Activated CD8-positive, alpha-beta T cell treated with anti-CD3 and anti-CD28 coated beads, Interleukin-2, amount 10 ng/mL, durations not matched to agents 7 days and 5 days (primary cell): ENCODE measurements at regions of chr7 and their contacts with region 1.

Region 1: GRCh38 chr7:76314042-76314721 is 11.7 kb downstream of the HSPB1 start:
- DNase-seq: peak; percentile 98
- ATAC-seq: peak; percentile 57
- H3K4me3 Mint-ChIP-seq: peak overlapping the region; percentile 49
- H3K27ac Mint-ChIP-seq: peak overlapping the region; percentile 83
- H3K4me1 Mint-ChIP-seq: peaks cover 31% of the 10 kb centered on the region
- H3K27me3 Mint-ChIP-seq: no peaks in the 10 kb centered on the region

Region 2: DNA sequence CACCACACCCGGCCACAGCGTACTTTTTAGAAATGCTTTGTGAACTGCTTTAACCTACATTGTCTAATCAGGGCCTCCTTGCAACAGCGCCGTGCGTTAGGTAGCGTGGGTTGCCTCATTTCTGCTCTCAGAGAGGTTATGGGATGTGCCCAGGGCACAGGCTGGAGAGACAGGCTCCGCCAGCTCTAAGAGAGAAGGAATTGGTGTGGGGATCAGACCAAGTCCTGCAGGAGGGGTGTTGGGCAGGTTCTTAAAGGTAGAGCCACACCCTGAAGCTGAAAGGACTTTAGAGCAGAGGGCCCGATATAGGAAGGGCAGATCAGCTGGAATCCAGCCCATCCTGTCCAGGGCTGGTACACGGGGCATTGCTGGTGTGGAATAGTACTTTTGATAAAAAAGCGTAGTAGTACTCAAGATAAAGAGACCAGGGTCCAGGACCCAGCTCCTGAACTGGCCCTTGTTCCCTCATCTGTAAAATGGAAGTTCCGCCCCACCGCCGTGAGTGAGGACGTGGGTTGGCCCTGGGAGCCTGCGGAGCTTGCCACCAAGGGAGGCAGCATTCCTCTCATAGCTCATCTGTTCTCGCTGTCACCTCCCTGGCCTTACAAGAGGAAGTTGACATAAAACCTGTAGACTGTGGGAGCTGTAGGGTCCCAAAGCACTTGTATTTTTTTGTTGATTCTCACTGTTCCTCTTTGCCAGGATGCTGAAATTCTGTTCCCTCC is 357.0 kb before region 1 on chr7:
- CTCF ChIA-PET with region 1: no interaction called
- POLR2A ChIA-PET with region 1: no interaction called
- DNase-seq: no peak
- ATAC-seq: no peak
- H3K4me3 Mint-ChIP-seq: no peak overlapping the region
- H3K27ac Mint-ChIP-seq: no peak overlapping the region
- H3K4me1 Mint-ChIP-seq: no peaks in the 10 kb centered on the region
- H3K27me3 Mint-ChIP-seq: no peaks in the 10 kb centered on the region

Region 3: DNA sequence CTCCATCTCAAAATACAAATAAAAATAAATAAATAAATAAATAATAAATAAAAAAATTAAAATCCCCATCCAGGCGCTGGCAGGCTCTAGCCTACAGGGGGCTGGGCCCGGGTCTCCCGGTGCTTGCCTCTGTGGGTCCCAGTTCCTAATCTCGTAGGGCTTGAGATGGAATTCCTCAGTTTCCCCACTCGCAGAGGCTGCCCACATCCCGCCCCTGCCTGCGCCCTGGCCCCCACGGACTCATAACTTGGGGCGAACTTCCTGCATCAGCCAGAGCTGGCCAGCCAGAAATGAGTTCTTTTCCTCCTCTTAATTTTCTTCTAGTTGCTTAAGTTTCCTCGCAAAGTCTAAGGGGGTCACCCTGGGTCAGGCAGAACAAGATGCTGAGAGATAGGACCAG is 134.5 kb before region 1 on chr7:
- CTCF ChIA-PET with region 1: interaction called, 107 read pairs
- POLR2A ChIA-PET with region 1: interaction called, 9 read pairs
- DNase-seq: no peak
- ATAC-seq: no peak
- H3K4me3 Mint-ChIP-seq: no peak overlapping the region
- H3K27ac Mint-ChIP-seq: no peak overlapping the region
- H3K4me1 Mint-ChIP-seq: peaks cover 5% of the 10 kb centered on the region
- H3K27me3 Mint-ChIP-seq: no peaks in the 10 kb centered on the region

Region 4: GRCh38 chr7:76291343-76292212 is 22.6 kb before region 1 on chr7:
- CTCF ChIA-PET with region 1: interaction called, 93 read pairs
- POLR2A ChIA-PET with region 1: interaction called, 8 read pairs
- DNase-seq: peak; percentile 91
- ATAC-seq: peak; percentile 88
- H3K4me3 Mint-ChIP-seq: no peak overlapping the region
- H3K27ac Mint-ChIP-seq: peak overlapping the region; percentile 72
- H3K4me1 Mint-ChIP-seq: peaks cover 15% of the 10 kb centered on the region
- H3K27me3 Mint-ChIP-seq: peaks cover 4% of the 10 kb centered on the region

Region 5: DNA sequence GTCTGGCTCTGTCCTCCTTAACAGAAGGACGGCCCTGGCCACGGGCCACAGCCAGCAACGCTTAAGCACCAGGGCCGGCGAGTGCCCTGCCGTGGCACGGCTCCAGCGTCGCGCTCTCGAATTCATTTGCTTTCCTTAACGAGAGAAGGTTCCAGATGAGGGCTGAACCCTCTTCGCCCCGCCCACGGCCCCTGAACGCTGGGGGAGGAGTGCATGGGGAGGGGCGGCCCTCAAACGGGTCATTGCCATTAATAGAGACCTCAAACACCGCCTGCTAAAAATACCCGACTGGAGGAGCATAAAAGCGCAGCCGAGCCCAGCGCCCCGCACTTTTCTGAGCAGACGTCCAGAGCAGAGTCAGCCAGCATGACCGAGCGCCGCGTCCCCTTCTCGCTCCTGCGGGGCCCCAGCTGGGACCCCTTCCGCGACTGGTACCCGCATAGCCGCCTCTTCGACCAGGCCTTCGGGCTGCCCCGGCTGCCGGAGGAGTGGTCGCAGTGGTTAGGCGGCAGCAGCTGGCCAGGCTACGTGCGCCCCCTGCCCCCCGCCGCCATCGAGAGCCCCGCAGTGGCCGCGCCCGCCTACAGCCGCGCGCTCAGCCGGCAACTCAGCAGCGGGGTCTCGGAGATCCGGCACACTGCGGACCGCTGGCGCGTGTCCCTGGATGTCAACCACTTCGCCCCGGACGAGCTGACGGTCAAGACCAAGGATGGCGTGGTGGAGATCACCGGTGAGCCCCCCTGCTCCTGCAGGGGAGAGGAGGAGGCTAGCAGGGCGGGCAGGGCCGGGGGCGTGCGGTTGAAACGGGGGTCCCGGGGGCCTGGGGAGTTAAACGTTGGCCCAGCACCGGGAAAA is 11.6 kb before region 1 on chr7 and contains the start of gene HSPB1:
- CTCF ChIA-PET with region 1: interaction called, 21 read pairs
- POLR2A ChIA-PET with region 1: interaction called, 27 read pairs
- DNase-seq: peak; percentile 61
- ATAC-seq: peak; percentile 43
- H3K4me3 Mint-ChIP-seq: peak within 1 kb of the TSS; percentile 90
- H3K27ac Mint-ChIP-seq: peak within 1 kb of the TSS; percentile 87
- H3K4me1 Mint-ChIP-seq: peaks cover 19% of the 10 kb centered on the region
- H3K27me3 Mint-ChIP-seq: peaks cover 9% of the 10 kb centered on the region
- total RNA-seq, gene HSPB1: 37.2 to 40.4 TPM

Region 6: DNA sequence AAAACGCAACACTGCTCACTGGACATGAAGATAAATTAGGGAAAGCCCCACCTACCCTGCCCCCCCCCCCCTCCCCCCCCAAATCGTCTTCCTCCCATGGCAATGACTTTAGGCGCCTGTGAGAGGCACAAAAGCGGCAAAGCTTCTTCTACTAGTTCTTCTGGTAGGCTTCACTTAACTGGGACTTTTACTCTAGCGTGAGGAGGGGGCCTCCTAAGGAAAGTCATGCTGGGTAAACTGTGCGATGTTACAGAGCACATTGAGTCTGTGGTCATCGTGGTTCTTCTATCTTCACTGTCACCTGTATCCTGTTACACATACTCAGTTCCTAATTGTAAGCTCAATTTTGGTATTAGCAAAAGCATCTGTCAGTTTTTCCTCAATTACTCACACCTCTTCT is 13.4 kb after region 1 on chr7:
- CTCF ChIA-PET with region 1: interaction called, 14 read pairs
- POLR2A ChIA-PET with region 1: interaction called, 23 read pairs
- DNase-seq: no peak
- ATAC-seq: peak; percentile 21
- H3K4me3 Mint-ChIP-seq: no peak overlapping the region
- H3K27ac Mint-ChIP-seq: peak overlapping the region; percentile 46
- H3K4me1 Mint-ChIP-seq: peaks cover 23% of the 10 kb centered on the region
- H3K27me3 Mint-ChIP-seq: no peaks in the 10 kb centered on the region

Region 7: DNA sequence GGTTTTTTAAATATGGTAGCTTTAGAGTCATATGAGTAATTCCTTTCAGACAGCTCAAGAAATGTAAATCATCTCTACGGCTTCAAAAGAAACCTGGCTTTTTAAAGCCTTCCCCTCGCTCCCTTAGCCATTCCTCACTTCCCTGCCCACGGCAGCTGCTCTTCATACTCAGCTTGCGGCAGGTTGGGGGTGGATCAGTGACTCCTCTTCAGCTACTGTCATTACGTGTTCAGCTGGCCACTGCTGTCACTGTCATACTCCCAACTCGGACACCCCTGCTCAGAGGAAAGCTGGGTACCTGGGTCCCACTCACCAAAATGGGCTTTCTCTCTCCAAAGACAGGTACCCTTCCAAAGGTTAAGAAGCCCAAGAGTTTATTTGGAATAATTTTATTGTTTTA is 38.0 kb after region 1 on chr7:
- CTCF ChIA-PET with region 1: interaction called, 3 read pairs
- POLR2A ChIA-PET with region 1: interaction called, 55 read pairs
- DNase-seq: no peak
- ATAC-seq: no peak
- H3K4me3 Mint-ChIP-seq: no peak overlapping the region
- H3K27ac Mint-ChIP-seq: peak overlapping the region; percentile 5
- H3K4me1 Mint-ChIP-seq: peaks cover 54% of the 10 kb centered on the region
- H3K27me3 Mint-ChIP-seq: no peaks in the 10 kb centered on the region

Region 8: GRCh38 chr7:76359111-76359978 is 45.2 kb after region 1 on chr7:
- CTCF ChIA-PET with region 1: interaction called, 26 read pairs
- POLR2A ChIA-PET with region 1: interaction called, 55 read pairs
- DNase-seq: peak; percentile 97
- ATAC-seq: peak; percentile 96
- H3K4me3 Mint-ChIP-seq: peak overlapping the region; percentile 98
- H3K27ac Mint-ChIP-seq: peak overlapping the region; percentile 99
- H3K4me1 Mint-ChIP-seq: peaks cover 45% of the 10 kb centered on the region
- H3K27me3 Mint-ChIP-seq: no peaks in the 10 kb centered on the region